Stomach (tissue), 19 donors: ENCODE measurements at regions of chr4 and their contacts with region 1.

Region 1: DNA sequence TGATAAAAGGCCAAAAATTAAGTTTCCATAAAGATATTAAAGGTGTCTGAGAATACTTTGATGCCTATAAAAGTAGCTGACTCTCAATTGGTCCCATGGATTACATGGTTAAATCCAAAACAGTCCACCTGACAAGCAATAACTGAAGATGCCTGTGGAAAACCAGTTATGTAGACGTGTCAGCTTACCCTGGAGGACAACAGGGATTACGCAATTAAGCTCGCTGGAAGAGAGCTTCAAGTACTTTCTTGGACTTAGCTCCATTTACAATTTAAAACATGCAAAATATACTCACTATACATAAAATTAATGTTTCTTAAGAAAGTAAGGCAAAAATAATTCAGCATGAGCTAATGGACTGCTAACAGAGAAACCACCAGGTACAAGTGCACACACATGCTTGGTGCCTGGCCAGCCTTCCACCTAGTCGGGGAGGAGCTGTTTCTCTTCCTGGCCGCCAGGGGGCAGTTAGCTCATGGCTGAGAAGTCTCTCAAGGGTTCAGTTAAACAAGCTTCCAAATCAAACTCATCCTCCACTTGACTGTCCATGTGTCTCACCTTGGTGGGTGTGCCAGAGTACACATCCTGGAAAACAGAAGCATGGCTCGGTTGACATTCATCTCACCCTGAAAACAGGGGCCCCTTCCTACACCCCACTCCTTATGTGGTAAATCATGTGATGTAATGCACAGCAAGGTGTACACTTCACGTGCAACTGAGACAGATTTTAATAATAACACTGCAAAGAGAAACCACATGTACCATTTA is 9.2 kb upstream of the FAM53A start:
- DNase-seq: peak; percentile 80 to 91
- H3K4me3 ChIP-seq: no peak overlapping the region
- H3K27ac ChIP-seq: no peak overlapping the region
- H3K4me1 ChIP-seq: peaks cover 0 to 7% (median 0%) of the 10 kb centered on the region in 4 donors
- H3K27me3 ChIP-seq: no peaks in the 10 kb centered on the region
- CTCF ChIP-seq: peak in 5 of 7 experiments; percentile 90 to 94 (median 93)
- EP300 ChIP-seq: no peak
- POLR2A ChIP-seq: no peak

Region 2: DNA sequence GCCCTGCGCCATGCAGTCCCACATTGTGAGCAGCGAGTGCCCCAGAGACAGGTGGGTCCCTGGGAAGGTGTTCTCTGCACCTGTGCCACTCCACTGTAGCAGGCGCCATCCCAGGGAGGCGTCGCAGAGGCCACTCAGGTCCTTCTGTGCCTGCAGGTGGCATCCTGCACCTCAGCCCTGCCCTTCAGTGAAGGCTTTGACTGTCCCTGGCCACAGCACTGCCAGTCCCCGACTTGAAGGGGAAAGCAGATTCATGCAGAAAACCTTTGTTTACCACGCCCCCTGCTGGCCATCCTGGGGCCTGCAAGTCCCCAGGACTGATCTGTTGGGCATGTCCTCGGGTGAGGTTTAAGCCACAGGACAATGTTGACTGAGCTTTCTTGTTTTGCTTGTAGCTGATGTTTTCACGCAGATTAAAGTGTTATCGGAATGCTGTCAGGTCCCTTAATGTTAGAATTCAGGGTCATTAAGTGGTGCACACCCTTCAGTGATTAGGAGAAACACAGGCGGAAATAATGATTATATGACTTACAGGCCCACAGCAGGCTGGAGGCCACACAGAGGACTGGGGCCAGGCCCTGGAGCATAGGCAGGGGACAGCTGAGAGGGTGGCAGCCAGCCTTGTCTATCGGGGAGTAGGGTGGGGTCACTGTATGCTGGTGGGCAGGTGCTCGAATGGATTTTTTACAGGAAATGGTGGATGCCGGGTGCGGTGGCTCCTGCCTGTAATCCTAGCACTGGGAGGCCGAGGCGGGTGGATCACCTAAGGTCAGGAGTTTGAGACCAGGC is 33.0 kb after region 1 on chr4:
- intact Hi-C with region 1: loop called (anchors 5 kb)
- DNase-seq: peak; percentile 94 to 96
- H3K4me3 ChIP-seq: peak overlapping the region in 1 of 4 donors; percentile 13
- H3K27ac ChIP-seq: peak overlapping the region; percentile 37 to 83 (median 67)
- H3K4me1 ChIP-seq: peaks cover 38 to 80% (median 60%) of the 10 kb centered on the region in 4 donors
- H3K27me3 ChIP-seq: no peaks in the 10 kb centered on the region
- CTCF ChIP-seq: peak in 6 of 7 experiments; percentile 73 to 100 (median 98)
- EP300 ChIP-seq: no peak
- POLR2A ChIP-seq: no peak

Region 3: DNA sequence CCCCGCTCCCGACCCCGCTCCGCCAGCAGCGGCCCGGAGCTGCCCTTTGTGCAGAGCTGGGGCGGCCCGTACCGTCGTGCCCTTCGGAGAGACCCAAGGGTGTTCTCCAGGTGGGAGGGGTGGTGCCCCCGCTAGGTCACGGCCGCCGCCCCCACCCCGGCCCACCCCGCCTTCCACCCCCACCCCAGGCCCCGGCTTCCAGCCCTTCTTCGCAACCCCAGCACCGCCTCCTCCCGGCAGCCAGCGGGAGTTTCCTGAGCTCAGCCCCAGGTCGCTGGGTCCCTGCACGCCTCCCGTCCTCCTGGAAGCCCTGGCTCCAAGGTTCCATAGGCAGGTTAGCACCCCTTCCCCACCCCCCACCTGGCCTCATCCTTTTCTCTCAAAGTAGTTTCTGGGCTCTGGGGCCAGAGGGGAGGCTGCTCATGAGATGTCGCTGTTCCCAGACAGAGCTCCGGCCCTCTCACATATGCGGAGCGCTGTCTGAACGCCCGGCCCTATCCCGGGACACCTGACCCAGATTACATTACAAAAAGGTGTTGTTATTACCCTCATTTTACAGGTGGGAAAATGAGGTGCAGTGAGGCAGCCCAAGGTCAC is 74.6 kb after region 1 on chr4:
- intact Hi-C with region 1: no loop called
- DNase-seq: peak; percentile 47 to 89
- H3K4me3 ChIP-seq: peak overlapping the region; percentile 39 to 52 (median 46)
- H3K27ac ChIP-seq: no peak overlapping the region
- H3K4me1 ChIP-seq: peaks cover 23 to 51% (median 48%) of the 10 kb centered on the region in 4 donors
- H3K27me3 ChIP-seq: peaks cover 0 to 98% (median 14%) of the 10 kb centered on the region in 3 donors
- CTCF ChIP-seq: peak in 1 of 7 experiments; percentile 23
- EP300 ChIP-seq: no peak
- POLR2A ChIP-seq: no peak